ENCODE measurements at regions of chr6 and their contacts with region 1.

Region 1: GRCh38 chr6:41602864-41603608 is 35.2 kb upstream of the MDFI start:
- DNase-seq: peak; percentile 82
- H3K4me3 ChIP-seq: no peak overlapping the region
- H3K27ac ChIP-seq: no peak overlapping the region
- H3K4me1 ChIP-seq: no peaks in the 10 kb centered on the region
- H3K27me3 ChIP-seq: no peaks in the 10 kb centered on the region
- CTCF ChIP-seq: peak; percentile 89 to 91
- POLR2A ChIP-seq: no peak

Region 2: DNA sequence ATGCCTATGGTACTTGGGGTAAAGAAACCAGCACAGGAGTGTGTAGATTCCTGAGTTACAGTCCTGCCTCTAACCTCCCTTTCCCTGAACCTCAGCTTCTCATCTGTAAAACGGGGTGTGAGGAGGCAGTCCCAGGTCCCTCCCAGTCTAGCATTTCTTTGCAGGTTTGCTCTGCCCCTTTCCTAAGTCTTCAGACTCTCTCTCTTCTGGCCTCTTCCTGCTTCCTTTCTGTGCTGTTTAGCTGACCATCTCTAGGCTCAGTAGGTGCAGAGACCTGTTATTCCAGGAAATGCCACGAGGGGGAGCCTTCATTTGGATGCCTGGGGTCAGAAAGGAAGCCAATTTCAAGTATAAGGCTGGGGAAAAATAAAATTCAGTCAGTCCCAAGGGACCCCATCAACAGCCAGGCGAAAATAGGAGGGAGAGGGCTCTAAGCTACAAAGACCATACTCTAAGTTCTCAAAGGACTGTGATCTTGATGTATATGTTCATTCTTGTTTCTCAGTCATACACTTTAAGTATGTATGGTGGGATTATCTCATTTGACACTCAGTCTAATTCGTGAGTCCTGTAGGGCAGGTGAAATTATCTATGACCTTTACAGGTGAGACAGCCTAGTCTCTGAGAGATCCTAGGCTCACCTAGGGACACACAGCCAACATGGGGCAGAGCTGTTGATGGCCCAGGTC is 178.5 kb before region 1 on chr6:
- CTCF ChIA-PET with region 1: interaction called, 84 read pairs
- POLR2A ChIA-PET with region 1: no interaction called
- dilution Hi-C with region 1: no loop called
- intact Hi-C with region 1: loop called (anchors 1 kb)
- DNase-seq: peak; percentile 77
- H3K4me3 ChIP-seq: no peak overlapping the region
- H3K27ac ChIP-seq: no peak overlapping the region
- H3K4me1 ChIP-seq: no peaks in the 10 kb centered on the region
- H3K27me3 ChIP-seq: peaks cover 37 to 46% of the 10 kb centered on the region in 2 experiments
- CTCF ChIP-seq: peak; percentile 70 to 78
- POLR2A ChIP-seq: no peak

Region 3: DNA sequence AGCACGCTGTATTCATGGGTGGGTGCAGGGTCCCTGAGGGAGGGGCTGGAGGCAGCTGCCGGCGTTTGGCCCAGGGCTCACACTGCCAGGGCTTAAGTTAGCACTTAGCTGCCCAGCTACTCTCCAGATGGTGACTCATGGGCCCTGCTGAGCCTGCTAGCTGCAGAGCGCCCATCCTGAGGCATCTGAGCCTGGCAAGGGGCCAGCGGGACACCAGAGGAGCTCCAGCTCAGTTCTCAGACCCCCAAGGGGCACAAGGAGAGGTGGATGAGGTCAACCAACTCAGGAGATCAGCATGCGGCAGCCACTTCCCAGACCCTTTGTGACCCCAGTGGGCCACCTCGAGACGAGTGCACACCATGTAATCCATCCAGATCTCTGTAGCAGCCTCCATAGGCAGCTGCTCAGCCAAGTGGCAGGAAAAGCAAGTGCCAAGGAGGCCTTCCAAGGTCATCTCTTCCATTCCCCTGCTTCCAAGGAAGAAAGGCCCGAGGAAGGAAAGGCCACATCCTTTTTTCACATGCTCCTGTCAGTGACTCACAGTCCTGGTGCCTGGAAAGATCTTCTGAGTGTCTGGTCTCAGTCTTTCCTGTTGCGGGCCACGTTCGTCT is 21.6 kb before region 1 on chr6:
- CTCF ChIA-PET with region 1: interaction called, 11 read pairs
- POLR2A ChIA-PET with region 1: no interaction called
- dilution Hi-C with region 1: no loop called
- intact Hi-C with region 1: no loop called
- DNase-seq: peak; percentile 85
- H3K4me3 ChIP-seq: no peak overlapping the region
- H3K27ac ChIP-seq: peak overlapping the region; percentile 36
- H3K4me1 ChIP-seq: peaks cover 35% of the 10 kb centered on the region
- H3K27me3 ChIP-seq: no peaks in the 10 kb centered on the region
- CTCF ChIP-seq: no peak
- POLR2A ChIP-seq: no peak

Region 4: DNA sequence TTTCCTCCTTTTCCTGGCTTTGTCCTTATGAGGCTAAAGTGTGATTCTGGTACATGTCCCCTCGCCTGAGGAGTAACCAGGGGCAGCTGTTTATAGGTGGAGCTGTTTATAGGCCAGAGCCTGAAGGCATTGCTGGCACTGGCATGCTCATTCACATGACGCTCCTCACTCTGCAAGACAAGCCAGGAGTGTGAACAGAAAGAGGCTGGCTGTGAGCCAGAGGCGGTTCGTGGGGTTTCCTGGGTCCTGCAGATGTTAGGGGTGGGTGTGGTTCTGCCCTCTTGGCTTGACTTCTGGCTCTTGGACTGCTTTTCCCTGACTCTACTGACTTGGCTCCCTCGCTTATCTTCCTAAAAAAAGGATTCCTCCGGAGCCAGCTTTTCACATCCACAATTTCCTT is 22.4 kb after region 1 on chr6:
- CTCF ChIA-PET with region 1: interaction called, 20 read pairs
- POLR2A ChIA-PET with region 1: no interaction called
- dilution Hi-C with region 1: no loop called
- intact Hi-C with region 1: no loop called
- DNase-seq: no peak
- H3K4me3 ChIP-seq: no peak overlapping the region
- H3K27ac ChIP-seq: no peak overlapping the region
- H3K4me1 ChIP-seq: peaks cover 25% of the 10 kb centered on the region
- H3K27me3 ChIP-seq: peaks cover 0 to under 1% of the 10 kb centered on the region in 2 experiments
- CTCF ChIP-seq: no peak
- POLR2A ChIP-seq: no peak

Region 5: GRCh38 chr6:41655711-41656691 is 53.0 kb after region 1 on chr6:
- CTCF ChIA-PET with region 1: interaction called, 10 read pairs
- POLR2A ChIA-PET with region 1: no interaction called
- dilution Hi-C with region 1: no loop called
- intact Hi-C with region 1: no loop called
- DNase-seq: peak; percentile 73
- H3K4me3 ChIP-seq: no peak overlapping the region
- H3K27ac ChIP-seq: peak overlapping the region; percentile 11
- H3K4me1 ChIP-seq: peaks cover 17% of the 10 kb centered on the region
- H3K27me3 ChIP-seq: no peaks in the 10 kb centered on the region
- CTCF ChIP-seq: no peak
- POLR2A ChIP-seq: peak; percentile 67

Region 6: GRCh38 chr6:41683510-41684310 is 80.7 kb after region 1 on chr6:
- CTCF ChIA-PET with region 1: interaction called, 226 read pairs
- POLR2A ChIA-PET with region 1: interaction called, 4 read pairs
- dilution Hi-C with region 1: no loop called
- intact Hi-C with region 1: loop called (anchors 1 kb)
- DNase-seq: peak; percentile 64
- H3K4me3 ChIP-seq: peak overlapping the region in 1 of 3 experiments; percentile 35
- H3K27ac ChIP-seq: no peak overlapping the region
- H3K4me1 ChIP-seq: peaks cover 8% of the 10 kb centered on the region
- H3K27me3 ChIP-seq: no peaks in the 10 kb centered on the region
- CTCF ChIP-seq: peak; percentile 88 to 97
- POLR2A ChIP-seq: no peak

Region 7: GRCh38 chr6:42088101-42088591 is 485.1 kb after region 1 on chr6:
- CTCF ChIA-PET with region 1: no interaction called
- POLR2A ChIA-PET with region 1: no interaction called
- dilution Hi-C with region 1: no loop called
- intact Hi-C with region 1: no loop called
- DNase-seq: no peak
- H3K4me3 ChIP-seq: no peak overlapping the region
- H3K27ac ChIP-seq: no peak overlapping the region
- H3K4me1 ChIP-seq: peaks cover 5% of the 10 kb centered on the region
- H3K27me3 ChIP-seq: peaks cover 0 to 2% of the 10 kb centered on the region in 2 experiments
- CTCF ChIP-seq: no peak
- POLR2A ChIP-seq: no peak